Dendritic cell treated with granulocyte-macrophage colony-stimulating factor and Interleukin-4, amounts not matched to agents 40 ng/mL and 50 ng/mL, for 4 days (primary cell): ENCODE measurements at regions of chr4 and their contacts with region 1.

Region 1: GRCh38 chr4:15479089-15479912 is 9.6 kb downstream of the CC2D2A start:
- H3K4me3 Mint-ChIP-seq: no peak overlapping the region
- H3K27ac Mint-ChIP-seq: no peak overlapping the region
- H3K4me1 Mint-ChIP-seq: peaks cover 3% of the 10 kb centered on the region
- H3K27me3 Mint-ChIP-seq: no peaks in the 10 kb centered on the region

Region 2: GRCh38 chr4:15295421-15296162 is 183.7 kb before region 1 on chr4:
- intact Hi-C with region 1: no loop called
- H3K4me3 Mint-ChIP-seq: no peak overlapping the region
- H3K27ac Mint-ChIP-seq: no peak overlapping the region
- H3K4me1 Mint-ChIP-seq: no peaks in the 10 kb centered on the region
- H3K27me3 Mint-ChIP-seq: no peaks in the 10 kb centered on the region

Region 3: DNA sequence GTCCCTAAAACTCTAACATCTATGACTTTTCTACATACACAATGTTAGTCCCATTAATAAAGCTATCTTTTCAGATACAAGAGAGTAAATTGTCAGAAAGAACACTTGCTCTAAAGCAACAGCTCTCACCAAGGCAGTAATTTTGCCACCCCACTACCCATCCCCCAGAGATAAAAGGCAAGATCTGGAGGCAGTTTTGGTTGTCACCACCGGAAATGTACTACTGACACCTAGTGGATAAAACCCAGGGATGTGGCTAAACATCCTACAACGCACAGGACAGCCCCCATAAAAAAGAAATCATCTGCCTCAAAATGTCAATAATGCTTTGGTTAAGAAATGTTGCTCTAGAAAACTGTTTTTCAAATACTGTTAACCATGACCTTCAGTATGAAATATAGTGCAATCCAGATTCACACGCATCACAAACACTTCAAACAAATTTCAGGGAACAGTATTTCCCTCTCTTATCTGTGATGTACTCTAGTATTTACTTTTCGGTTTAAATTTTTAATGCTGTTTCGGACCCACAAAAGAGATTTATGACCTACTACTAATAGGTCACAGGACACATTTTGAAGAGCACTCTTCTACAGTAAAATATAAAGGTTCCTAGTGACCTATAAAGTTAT is 170.7 kb after region 1 on chr4:
- intact Hi-C with region 1: loop called (anchors 2 kb)
- H3K4me3 Mint-ChIP-seq: peak overlapping the region; percentile 13
- H3K27ac Mint-ChIP-seq: no peak overlapping the region
- H3K4me1 Mint-ChIP-seq: peaks cover 48% of the 10 kb centered on the region
- H3K27me3 Mint-ChIP-seq: no peaks in the 10 kb centered on the region

Region 4: GRCh38 chr4:15799701-15800100 is 320.4 kb after region 1 on chr4:
- intact Hi-C with region 1: loop called (anchors 5 kb)
- H3K4me3 Mint-ChIP-seq: no peak overlapping the region
- H3K27ac Mint-ChIP-seq: peak overlapping the region; percentile 49
- H3K4me1 Mint-ChIP-seq: peaks cover 13% of the 10 kb centered on the region
- H3K27me3 Mint-ChIP-seq: no peaks in the 10 kb centered on the region